Caco-2 (cell line): ENCODE measurements at regions of chr12 and their contacts with region 1.

Region 1: GRCh38 chr12:31406345-31406744 is 80.4 kb upstream of the SINHCAF start:
- DNase-seq: no peak
- H3K4me3 ChIP-seq: no peak overlapping the region
- H3K4me3 Mint-ChIP-seq: no peak overlapping the region
- H3K27ac Mint-ChIP-seq: peak overlapping the region; percentile 3
- H3K4me1 ChIP-seq: no peaks in the 10 kb centered on the region; the same call in 1 of the 2 replicates
- H3K4me1 Mint-ChIP-seq: no peaks in the 10 kb centered on the region
- H3K27me3 ChIP-seq: peaks cover 1% of the 10 kb centered on the region
- H3K27me3 Mint-ChIP-seq: no peaks in the 10 kb centered on the region
- CTCF ChIP-seq: no peak

Region 2: GRCh38 chr12:31369712-31370521 is 36.4 kb before region 1 on chr12:
- CTCF ChIA-PET with region 1: interaction called, 12 read pairs
- POLR2A ChIA-PET with region 1: interaction called, 5 read pairs
- intact Hi-C with region 1: loop called (anchors 1 kb)
- DNase-seq: peak; percentile 72 to 75
- H3K4me3 ChIP-seq: peak overlapping the region; percentile 27
- H3K4me3 Mint-ChIP-seq: peak overlapping the region; percentile 70
- H3K27ac Mint-ChIP-seq: peak overlapping the region; percentile 100
- H3K4me1 ChIP-seq: peaks cover 26% of the 10 kb centered on the region
- H3K4me1 Mint-ChIP-seq: peaks cover 43% of the 10 kb centered on the region
- H3K27me3 ChIP-seq: no peaks in the 10 kb centered on the region
- H3K27me3 Mint-ChIP-seq: no peaks in the 10 kb centered on the region
- CTCF ChIP-seq: no peak

Region 3: GRCh38 chr12:31456562-31456961 is 50.2 kb after region 1 on chr12:
- CTCF ChIA-PET with region 1: no interaction called
- POLR2A ChIA-PET with region 1: no interaction called
- intact Hi-C with region 1: loop called (anchors 5 kb)
- DNase-seq: no peak
- H3K4me3 ChIP-seq: no peak overlapping the region
- H3K4me3 Mint-ChIP-seq: no peak overlapping the region
- H3K27ac Mint-ChIP-seq: no peak overlapping the region
- H3K4me1 ChIP-seq: no peaks in the 10 kb centered on the region
- H3K4me1 Mint-ChIP-seq: no peaks in the 10 kb centered on the region
- H3K27me3 ChIP-seq: no peaks in the 10 kb centered on the region
- H3K27me3 Mint-ChIP-seq: no peaks in the 10 kb centered on the region
- CTCF ChIP-seq: no peak

Region 4: DNA sequence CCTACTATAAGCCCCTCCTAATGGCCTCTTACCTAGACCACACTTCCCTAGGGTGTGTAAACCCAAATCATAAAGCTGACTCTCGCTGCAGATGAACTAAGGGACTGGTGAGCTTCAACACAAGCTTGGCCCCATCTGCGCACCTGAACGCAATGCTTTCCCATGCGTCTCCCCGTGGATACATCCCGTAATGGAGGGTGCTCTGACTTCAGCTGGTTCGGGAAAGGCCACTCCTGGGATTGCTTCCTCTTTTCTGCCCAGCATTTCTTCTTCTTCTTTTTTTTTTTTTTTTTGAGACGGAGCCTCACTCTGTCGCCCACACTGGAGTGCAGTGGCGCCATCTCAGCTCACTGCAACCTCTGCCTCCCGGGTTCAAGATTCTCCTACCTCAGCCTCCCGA is 225.4 kb after region 1 on chr12:
- CTCF ChIA-PET with region 1: interaction called, 6 read pairs
- POLR2A ChIA-PET with region 1: no interaction called
- intact Hi-C with region 1: loop called (anchors 1 kb)
- DNase-seq: peak in 1 of 2 experiments; percentile 23
- H3K4me3 ChIP-seq: no peak overlapping the region
- H3K4me3 Mint-ChIP-seq: no peak overlapping the region
- H3K27ac Mint-ChIP-seq: no peak overlapping the region
- H3K4me1 ChIP-seq: no peaks in the 10 kb centered on the region
- H3K4me1 Mint-ChIP-seq: peaks cover 20% of the 10 kb centered on the region
- H3K27me3 ChIP-seq: no peaks in the 10 kb centered on the region
- H3K27me3 Mint-ChIP-seq: no peaks in the 10 kb centered on the region
- CTCF ChIP-seq: no peak

Region 5: GRCh38 chr12:32302218-32303173 is 896.2 kb after region 1 on chr12:
- CTCF ChIA-PET with region 1: no interaction called
- POLR2A ChIA-PET with region 1: no interaction called
- intact Hi-C with region 1: loop called (anchors 10 kb)
- DNase-seq: no peak
- H3K4me3 ChIP-seq: no peak overlapping the region
- H3K4me3 Mint-ChIP-seq: no peak overlapping the region
- H3K27ac Mint-ChIP-seq: peak overlapping the region; percentile 29
- H3K4me1 ChIP-seq: 0 out of 2 replicates have a peak, but pooled peaks cover 11% of the 10 kb centered on the region
- H3K4me1 Mint-ChIP-seq: peaks cover 25% of the 10 kb centered on the region
- H3K27me3 ChIP-seq: no peaks in the 10 kb centered on the region
- H3K27me3 Mint-ChIP-seq: no peaks in the 10 kb centered on the region
- CTCF ChIP-seq: no peak